CD4-positive, alpha-beta memory T cell (primary cell): ENCODE measurements at regions of chr20 and their contacts with region 1.

Region 1: GRCh38 chr20:3888622-3889488 is at the start of gene PANK2:
- DNase-seq: peak; percentile 95 to 98 (median 96)
- H3K4me3 ChIP-seq: peak within 1 kb of the TSS; percentile 96 to 98
- H3K4me3 Mint-ChIP-seq: peak within 1 kb of the TSS; percentile 96 to 100 (median 98)
- H3K27ac ChIP-seq: peak within 1 kb of the TSS; percentile 79
- H3K27ac Mint-ChIP-seq: peak within 1 kb of the TSS; percentile 96 to 98 (median 97)
- H3K4me1 ChIP-seq: peaks cover 46% of the 10 kb centered on the region
- H3K4me1 Mint-ChIP-seq: peaks cover 34 to 68% (median 47%) of the 10 kb centered on the region in 4 donors
- H3K27me3 ChIP-seq: no peaks in the 10 kb centered on the region
- H3K27me3 Mint-ChIP-seq: no peaks in the 10 kb centered on the region
- total RNA-seq, gene PANK2: 71.4 to 80.5 TPM

Region 2: GRCh38 chr20:3846740-3847428 is 42.0 kb before region 1 on chr20 and contains the start of gene MAVS:
- CTCF ChIA-PET with region 1: no interaction called
- POLR2A ChIA-PET with region 1: no interaction called
- intact Hi-C with region 1: loop called (anchors 2 kb)
- DNase-seq: peak; percentile 81 to 84 (median 81)
- H3K4me3 ChIP-seq: peak within 1 kb of the TSS; percentile 45 to 92
- H3K4me3 Mint-ChIP-seq: peak within 1 kb of the TSS; percentile 79 to 93 (median 92)
- H3K27ac ChIP-seq: peak within 1 kb of the TSS; percentile 85
- H3K27ac Mint-ChIP-seq: peak within 1 kb of the TSS; percentile 78 to 97 (median 93)
- H3K4me1 ChIP-seq: peaks cover 27% of the 10 kb centered on the region
- H3K4me1 Mint-ChIP-seq: peaks cover 20 to 38% (median 25%) of the 10 kb centered on the region in 4 donors
- H3K27me3 ChIP-seq: no peaks in the 10 kb centered on the region
- H3K27me3 Mint-ChIP-seq: no peaks in the 10 kb centered on the region
- total RNA-seq, gene MAVS: 45.2 to 49.3 TPM

Region 3: DNA sequence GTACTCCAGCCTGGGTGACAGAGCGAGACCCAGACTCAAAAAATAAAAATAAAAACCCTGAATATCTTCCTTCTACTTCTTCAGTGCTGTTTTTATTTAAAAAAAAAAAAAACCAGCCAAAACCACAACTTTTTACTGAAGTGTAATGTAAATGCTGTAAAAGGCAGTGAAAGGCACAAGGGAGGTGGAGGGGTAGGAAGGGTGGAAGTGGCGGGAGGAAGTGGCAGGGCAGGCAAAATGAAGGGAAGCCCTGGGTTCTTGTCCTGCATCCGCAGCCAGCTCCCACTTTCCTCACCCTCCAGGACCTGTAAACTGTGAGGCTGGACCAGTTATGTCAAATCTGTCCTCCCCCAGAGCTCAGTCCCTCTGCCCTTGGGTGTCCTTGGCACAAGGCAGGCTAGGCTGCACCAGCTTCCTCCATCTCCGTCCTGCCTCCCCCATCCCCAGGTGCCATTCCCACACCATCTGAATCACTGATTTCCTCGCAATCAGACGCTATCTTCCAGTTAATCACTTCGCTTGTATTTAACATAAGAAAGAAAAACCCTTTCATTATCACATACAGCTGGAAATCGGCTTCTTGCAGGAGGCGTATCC is 13.4 kb before region 1 on chr20:
- CTCF ChIA-PET with region 1: interaction called, 3 read pairs
- POLR2A ChIA-PET with region 1: interaction called, 11 read pairs
- intact Hi-C with region 1: no loop called
- DNase-seq: no peak
- H3K4me3 ChIP-seq: no peak overlapping the region
- H3K4me3 Mint-ChIP-seq: no peak overlapping the region
- H3K27ac ChIP-seq: no peak overlapping the region
- H3K27ac Mint-ChIP-seq: no peak overlapping the region
- H3K4me1 ChIP-seq: no peaks in the 10 kb centered on the region
- H3K4me1 Mint-ChIP-seq: peaks cover 4 to 23% (median 7%) of the 10 kb centered on the region in 4 donors
- H3K27me3 ChIP-seq: no peaks in the 10 kb centered on the region
- H3K27me3 Mint-ChIP-seq: no peaks in the 10 kb centered on the region

Region 4: DNA sequence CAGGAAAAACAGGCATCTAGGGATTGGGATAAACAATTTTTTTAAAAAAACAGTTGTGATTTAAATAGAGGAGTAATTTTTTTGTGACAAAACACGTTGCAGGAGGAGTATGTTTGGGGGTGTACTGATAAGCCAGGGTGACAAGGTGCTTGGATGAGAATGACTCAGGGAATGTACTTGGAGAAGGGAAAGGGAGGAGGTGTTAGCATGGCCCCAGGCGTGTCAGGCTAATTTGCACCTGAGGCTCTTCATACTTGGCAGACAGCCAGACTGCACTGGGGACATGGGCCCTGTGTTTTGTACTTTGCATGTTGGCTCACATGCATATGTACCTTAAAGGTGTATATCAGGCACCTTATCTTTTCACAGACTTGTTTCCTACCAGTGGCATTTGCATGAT is 23.1 kb after region 1 on chr20:
- CTCF ChIA-PET with region 1: interaction called, 5 read pairs
- POLR2A ChIA-PET with region 1: interaction called, 16 read pairs
- intact Hi-C with region 1: loop called (anchors 1 kb)
- DNase-seq: no peak
- H3K4me3 ChIP-seq: no peak overlapping the region
- H3K4me3 Mint-ChIP-seq: no peak overlapping the region
- H3K27ac ChIP-seq: no peak overlapping the region
- H3K27ac Mint-ChIP-seq: peak overlapping the region in 3 of 7 donors; percentile 9 to 88 (median 47)
- H3K4me1 ChIP-seq: peaks cover 35% of the 10 kb centered on the region
- H3K4me1 Mint-ChIP-seq: peaks cover 27 to 58% (median 50%) of the 10 kb centered on the region in 4 donors
- H3K27me3 ChIP-seq: no peaks in the 10 kb centered on the region
- H3K27me3 Mint-ChIP-seq: no peaks in the 10 kb centered on the region

Region 5: DNA sequence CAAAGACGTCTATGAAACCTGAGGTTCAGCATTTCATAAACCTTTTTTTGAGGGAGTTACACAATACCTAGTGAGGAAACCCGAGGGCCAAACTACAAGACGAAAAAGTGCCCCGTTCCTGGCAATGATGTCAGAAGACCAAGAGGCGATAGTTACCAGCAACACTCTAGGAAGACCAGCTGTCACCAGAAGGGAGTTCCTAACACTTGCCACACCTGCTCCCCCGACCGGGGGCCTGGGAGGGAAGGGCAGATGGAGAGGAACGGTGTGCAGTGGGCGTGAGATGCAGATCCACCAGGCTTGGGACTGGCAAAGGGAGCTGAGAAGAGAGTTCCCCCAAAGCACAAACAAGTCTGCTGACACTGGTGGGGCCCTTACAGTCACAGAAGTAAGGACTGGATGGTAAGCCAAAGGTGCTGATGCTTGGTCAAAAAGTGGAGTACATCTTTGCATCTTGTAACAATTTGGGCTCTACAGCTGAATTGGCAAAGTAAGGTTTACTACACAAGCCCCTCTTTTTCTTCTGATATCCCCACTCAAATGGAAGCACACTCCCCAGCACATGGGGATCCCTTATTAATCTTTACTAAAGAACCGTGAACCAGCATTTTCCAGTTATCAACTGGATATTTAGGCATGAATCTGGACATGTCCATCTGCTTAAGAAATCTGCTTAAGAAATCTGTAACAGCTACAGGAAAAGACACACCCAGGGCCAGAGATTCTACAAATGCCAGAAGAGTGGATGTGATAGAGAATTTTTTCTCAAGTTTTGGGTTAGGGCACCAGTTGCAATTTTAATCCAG is 38.8 kb after region 1 on chr20:
- CTCF ChIA-PET with region 1: interaction called, 3 read pairs
- POLR2A ChIA-PET with region 1: interaction called, 11 read pairs
- intact Hi-C with region 1: no loop called
- DNase-seq: no peak
- H3K4me3 ChIP-seq: no peak overlapping the region
- H3K4me3 Mint-ChIP-seq: peak overlapping the region in 1 of 8 donors; percentile 3
- H3K27ac ChIP-seq: no peak overlapping the region
- H3K27ac Mint-ChIP-seq: peak overlapping the region; percentile 10 to 79 (median 51)
- H3K4me1 ChIP-seq: peaks cover 31% of the 10 kb centered on the region
- H3K4me1 Mint-ChIP-seq: peaks cover 23 to 68% (median 47%) of the 10 kb centered on the region in 4 donors
- H3K27me3 ChIP-seq: no peaks in the 10 kb centered on the region
- H3K27me3 Mint-ChIP-seq: no peaks in the 10 kb centered on the region

Region 6: GRCh38 chr20:4045741-4046140 is 156.9 kb after region 1 on chr20:
- CTCF ChIA-PET with region 1: no interaction called
- POLR2A ChIA-PET with region 1: no interaction called
- intact Hi-C with region 1: no loop called
- DNase-seq: no peak
- H3K4me3 ChIP-seq: no peak overlapping the region
- H3K4me3 Mint-ChIP-seq: no peak overlapping the region
- H3K27ac ChIP-seq: no peak overlapping the region
- H3K27ac Mint-ChIP-seq: peak overlapping the region in 1 of 7 donors; percentile 52
- H3K4me1 ChIP-seq: no peaks in the 10 kb centered on the region
- H3K4me1 Mint-ChIP-seq: no peaks in the 10 kb centered on the region
- H3K27me3 ChIP-seq: no peaks in the 10 kb centered on the region
- H3K27me3 Mint-ChIP-seq: peaks cover 0 to 4% of the 10 kb centered on the region in 2 donors